Right lobe of liver (tissue), 6 donors: ENCODE measurements at regions of chr7 and their contacts with region 1.

Region 1: GRCh38 chr7:2241580-2242540 is at the starts of genes MRM2 and NUDT1:
- DNase-seq: peak; percentile 87 to 90 (median 89)
- ATAC-seq: peak; percentile 93 to 96 (median 96)
- H3K4me3 ChIP-seq: peak within 1 kb of the TSS; percentile 80 to 99 (median 99)
- H3K27ac ChIP-seq: peak within 1 kb of the TSS; percentile 34 to 40 (median 40)
- H3K4me1 ChIP-seq: peaks cover 0 to 17% (median 0%) of the 10 kb centered on the region in 4 donors
- H3K27me3 ChIP-seq: no peaks in the 10 kb centered on the region
- CTCF ChIP-seq: no peak
- POLR2A ChIP-seq: peak; percentile 59
- total RNA-seq, gene MRM2: 9.5 to 14.6 (median 11.5) TPM
- total RNA-seq, gene NUDT1: 1.6 to 4.1 (median 2.3) TPM

Region 2: GRCh38 chr7:2354186-2354938 is 112.5 kb after region 1 on chr7 and contains the start of gene EIF3B:
- intact Hi-C with region 1: loop called in 1 of 2 experiments (anchors 10 kb)
- DNase-seq: peak; percentile 87 to 91 (median 89)
- ATAC-seq: peak; percentile 89 to 94 (median 90)
- H3K4me3 ChIP-seq: peak within 1 kb of the TSS; percentile 95 to 99 (median 97)
- H3K27ac ChIP-seq: peak within 1 kb of the TSS; percentile 100
- H3K4me1 ChIP-seq: peaks cover 0 to 28% (median 4%) of the 10 kb centered on the region in 4 donors
- H3K27me3 ChIP-seq: no peaks in the 10 kb centered on the region
- CTCF ChIP-seq: no peak
- POLR2A ChIP-seq: peak; percentile 69
- total RNA-seq, gene EIF3B: 61.6 to 93.3 (median 68.3) TPM